RWPE1 (cell line): ENCODE measurements at regions of chr20 and their contacts with region 1.

Region 1: GRCh38 chr20:51595058-51595532 is 52.6 kb upstream of the NFATC2 start:
- DNase-seq: peak; percentile 97
- H3K27ac ChIP-seq: no peak overlapping the region
- CTCF ChIP-seq: peak; percentile 99

Region 2: GRCh38 chr20:50987592-50988210 is 607.4 kb before region 1 on chr20:
- CTCF ChIA-PET with region 1: interaction called, 34 read pairs
- POLR2A ChIA-PET with region 1: no interaction called
- DNase-seq: peak; percentile 87
- H3K27ac ChIP-seq: no peak overlapping the region
- CTCF ChIP-seq: peak; percentile 98

Region 3: DNA sequence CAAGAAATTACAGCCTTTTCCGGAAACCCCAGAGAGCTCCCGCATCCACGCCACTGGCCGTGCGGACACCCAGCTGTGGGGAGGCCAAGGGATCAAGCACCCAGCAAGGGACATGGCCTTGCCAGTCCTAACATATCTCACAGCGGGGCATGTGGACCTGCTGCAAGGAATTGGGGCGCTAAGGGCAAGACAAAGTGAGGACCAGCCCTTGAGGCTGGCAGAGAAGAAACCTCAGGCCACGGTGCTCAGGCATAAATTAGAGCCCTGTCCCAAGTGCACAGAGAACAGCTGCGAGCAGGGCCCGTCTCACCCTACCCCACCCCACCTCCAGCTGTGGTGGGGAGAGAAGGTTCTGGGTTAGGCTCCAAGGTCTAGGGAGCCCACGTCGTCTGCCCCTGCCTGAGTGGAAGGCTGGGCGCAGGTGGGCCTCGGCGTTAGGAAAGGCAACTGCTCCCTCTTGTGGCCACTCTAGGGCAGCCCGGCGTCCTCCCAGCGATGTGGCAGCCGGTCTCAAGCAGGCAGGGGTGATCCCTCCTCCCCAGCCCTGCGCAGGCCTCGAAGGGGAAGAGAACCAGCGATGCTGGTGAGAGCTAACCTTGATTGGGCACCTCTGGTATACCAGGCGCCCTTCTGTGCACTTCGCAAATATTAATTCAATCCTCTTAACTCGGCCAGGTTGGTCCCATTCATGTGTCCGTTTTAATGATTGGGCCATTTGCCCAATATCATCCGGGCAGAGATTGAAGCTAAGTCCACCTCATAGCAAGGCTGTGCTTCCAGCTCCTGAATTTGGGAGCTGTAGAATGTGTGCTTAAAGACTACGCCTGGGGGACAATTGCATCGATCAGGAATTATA is 288.4 kb before region 1 on chr20:
- CTCF ChIA-PET with region 1: interaction called, 10 read pairs
- POLR2A ChIA-PET with region 1: no interaction called
- DNase-seq: peak; percentile 95
- H3K27ac ChIP-seq: no peak overlapping the region
- CTCF ChIP-seq: peak; percentile 99

Region 4: GRCh38 chr20:51372176-51372803 is 222.8 kb before region 1 on chr20:
- CTCF ChIA-PET with region 1: interaction called, 49 read pairs
- POLR2A ChIA-PET with region 1: no interaction called
- DNase-seq: peak; percentile 98
- H3K27ac ChIP-seq: no peak overlapping the region
- CTCF ChIP-seq: peak; percentile 95

Region 5: GRCh38 chr20:51385646-51386530 is 209.2 kb before region 1 on chr20:
- CTCF ChIA-PET with region 1: interaction called, 73 read pairs
- POLR2A ChIA-PET with region 1: no interaction called
- DNase-seq: peak; percentile 73
- H3K27ac ChIP-seq: no peak overlapping the region
- CTCF ChIP-seq: no peak; the same call in 1 of the 2 replicates

Region 6: DNA sequence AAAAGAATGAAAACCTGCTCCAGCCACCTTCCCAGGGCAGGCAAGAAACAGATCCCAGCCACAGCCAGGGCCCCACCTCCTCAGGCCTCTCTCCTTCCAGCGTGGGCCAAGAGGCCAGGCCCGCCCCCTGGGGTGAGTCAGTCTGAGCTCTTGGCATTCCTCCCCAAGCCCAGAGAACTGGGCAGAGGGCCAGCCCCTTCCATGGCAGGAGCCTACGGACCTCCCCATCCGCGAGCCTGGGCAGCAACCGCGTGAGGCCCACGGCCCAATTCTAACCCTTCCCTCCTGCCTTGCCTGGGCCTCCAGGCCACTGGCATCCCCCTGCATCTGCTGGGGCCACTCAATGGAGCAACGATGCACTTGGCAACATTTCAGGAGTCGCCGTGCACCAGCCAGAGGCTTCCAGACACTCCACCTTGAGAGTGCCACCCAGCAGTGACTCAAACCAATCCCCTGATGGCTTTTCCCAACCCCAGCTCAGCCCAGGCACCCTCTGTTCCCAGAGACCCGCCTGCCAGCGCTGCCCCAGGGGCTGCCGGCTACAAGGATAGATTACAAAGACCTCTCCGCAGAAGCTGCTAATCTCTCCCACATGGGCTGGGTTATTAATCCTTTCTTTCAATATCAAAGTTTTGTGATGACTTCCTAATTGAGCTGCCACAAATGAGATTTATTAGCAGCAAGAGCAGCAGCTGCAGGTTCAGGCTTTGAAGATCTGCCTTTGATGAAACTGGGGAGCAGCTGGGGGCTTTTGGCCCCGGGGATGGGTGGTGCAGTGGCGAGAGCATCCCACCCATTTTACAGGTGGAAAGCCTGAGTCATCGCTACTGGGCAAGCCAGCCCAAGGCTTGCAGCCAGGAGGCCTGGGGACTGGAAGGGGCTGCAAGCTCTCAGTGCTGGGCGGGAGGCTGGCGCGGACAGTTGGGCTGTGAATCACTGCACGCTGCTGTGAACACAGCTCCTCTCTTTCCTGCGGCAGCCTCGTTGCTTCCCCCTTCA is 138.3 kb before region 1 on chr20:
- CTCF ChIA-PET with region 1: interaction called, 10 read pairs
- POLR2A ChIA-PET with region 1: no interaction called
- DNase-seq: peak; percentile 98
- H3K27ac ChIP-seq: peak overlapping the region; percentile 95
- CTCF ChIP-seq: no peak

Region 7: GRCh38 chr20:51541189-51542032 is 53.7 kb before region 1 on chr20:
- CTCF ChIA-PET with region 1: no interaction called
- POLR2A ChIA-PET with region 1: no interaction called
- DNase-seq: no peak
- H3K27ac ChIP-seq: no peak overlapping the region
- CTCF ChIP-seq: no peak